ENCODE measurements at regions of chr1 and their contacts with region 1.

Region 1: GRCh38 chr1:216600730-216601609 is 122.3 kb downstream of the ESRRG start:
- DNase-seq: peak; percentile 78
- ATAC-seq: peak; percentile 94
- H3K4me3 ChIP-seq: peak overlapping the region; percentile 65
- H3K27ac ChIP-seq: peak overlapping the region; percentile 80
- H3K4me1 ChIP-seq: peaks cover 5% of the 10 kb centered on the region
- H3K27me3 ChIP-seq: no peaks in the 10 kb centered on the region
- CTCF ChIP-seq: peak; percentile 61
- POLR2A ChIP-seq: peak; percentile 53; the same call in 1 of the 2 replicates
- RAD21 ChIP-seq: peak; percentile 49

Region 2: GRCh38 chr1:216464489-216464888 is 136.5 kb before region 1 on chr1:
- CTCF ChIA-PET with region 1: no interaction called
- POLR2A ChIA-PET with region 1: no interaction called
- dilution Hi-C with region 1: no loop called
- in situ Hi-C with region 1: no loop called
- intact Hi-C with region 1: loop called (anchors 5 kb)
- DNase-seq: peak; percentile 98
- ATAC-seq: peak; percentile 92
- H3K4me3 ChIP-seq: no peak overlapping the region
- H3K27ac ChIP-seq: no peak overlapping the region
- H3K4me1 ChIP-seq: peaks cover 14% of the 10 kb centered on the region
- H3K27me3 ChIP-seq: no peaks in the 10 kb centered on the region
- CTCF ChIP-seq: no peak
- POLR2A ChIP-seq: no peak
- RAD21 ChIP-seq: no peak

Region 3: DNA sequence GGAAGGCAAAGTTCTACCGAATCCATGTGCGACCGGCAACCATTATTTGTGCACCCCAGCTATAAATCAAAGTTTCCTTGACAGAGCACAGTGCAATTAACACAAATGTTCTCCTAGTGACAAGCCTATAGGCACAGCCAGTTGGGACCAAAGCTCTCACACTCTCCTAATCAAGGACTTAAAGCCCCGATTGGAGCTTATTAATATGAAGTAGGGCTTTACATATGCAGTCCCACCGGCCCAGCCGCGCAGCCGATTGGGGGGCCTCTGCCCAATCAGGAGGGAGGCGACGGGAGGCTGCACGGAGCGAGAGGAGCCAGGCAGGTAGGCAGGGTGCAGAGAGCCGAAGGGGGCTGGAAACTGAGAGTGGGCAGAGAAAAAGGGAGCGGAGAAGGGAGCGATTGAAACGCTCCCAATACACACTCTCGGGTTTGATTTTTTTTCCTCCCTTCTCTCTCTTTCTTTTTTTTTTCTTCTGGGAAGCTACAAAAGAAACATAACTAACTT is 122.4 kb after region 1 on chr1 and contains the start of gene ESRRG:
- CTCF ChIA-PET with region 1: interaction called, 4 read pairs
- POLR2A ChIA-PET with region 1: no interaction called
- dilution Hi-C with region 1: no loop called
- in situ Hi-C with region 1: no loop called
- intact Hi-C with region 1: loop called (anchors 5 kb)
- DNase-seq: peak; percentile 17
- ATAC-seq: peak; percentile 93
- H3K4me3 ChIP-seq: peak within 1 kb of the TSS; percentile 37
- H3K27ac ChIP-seq: no peak within 1 kb of the TSS
- H3K4me1 ChIP-seq: peaks cover 2% of the 10 kb centered on the region; the same call in 1 of the 2 replicates
- H3K27me3 ChIP-seq: no peaks in the 10 kb centered on the region
- CTCF ChIP-seq: no peak
- POLR2A ChIP-seq: no peak
- RAD21 ChIP-seq: no peak
- total RNA-seq, gene ESRRG: 0.54 and 0.56 TPM in 2 replicates

Region 4: DNA sequence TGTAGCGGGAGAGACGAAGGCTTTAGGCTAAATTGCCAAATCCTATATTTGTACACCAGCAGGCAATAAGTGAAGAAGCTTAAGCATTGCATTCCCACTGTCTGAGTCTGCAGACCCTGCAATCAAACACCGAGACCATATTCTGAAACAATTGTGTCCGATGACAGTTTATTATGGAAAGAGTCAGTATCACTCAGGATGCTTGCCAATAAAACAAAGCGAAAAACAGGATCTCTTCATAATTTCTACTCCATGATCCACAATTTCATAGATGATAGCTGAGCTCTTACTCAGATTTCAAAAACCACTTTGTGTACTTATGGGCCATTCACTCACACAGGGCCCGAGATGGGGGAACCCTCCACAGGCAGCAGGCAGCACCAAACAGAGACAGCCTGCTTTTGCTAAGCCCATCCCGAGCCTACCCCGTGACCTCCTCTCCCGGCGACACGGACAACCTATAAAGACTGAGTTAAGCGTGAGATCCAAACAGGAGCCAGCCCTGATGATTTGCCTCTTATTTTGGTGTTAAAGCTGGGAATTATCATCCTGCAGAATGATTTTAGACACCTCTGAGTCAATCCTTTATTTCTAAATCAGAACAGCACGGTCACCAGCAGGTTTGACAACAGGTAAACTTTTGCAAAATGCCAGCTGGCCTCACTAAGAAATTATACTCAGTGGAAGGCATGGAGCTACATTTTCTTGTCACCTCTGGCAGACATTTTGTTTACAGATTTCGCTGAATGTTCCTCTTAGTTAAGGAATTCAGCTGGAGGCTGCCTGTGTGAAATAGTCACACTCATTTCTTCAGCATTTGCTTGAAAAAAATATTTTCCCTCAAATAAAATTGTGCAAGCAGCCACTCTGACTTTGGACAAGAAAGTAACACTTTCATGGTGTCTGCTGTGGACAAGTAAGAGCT is 817.6 kb after region 1 on chr1:
- CTCF ChIA-PET with region 1: no interaction called
- POLR2A ChIA-PET with region 1: no interaction called
- dilution Hi-C with region 1: no loop called
- in situ Hi-C with region 1: no loop called
- intact Hi-C with region 1: loop called (anchors 10 kb)
- DNase-seq: peak; percentile 58
- ATAC-seq: peak; percentile 85
- H3K4me3 ChIP-seq: peak overlapping the region; percentile 12; the same call in 1 of the 2 replicates
- H3K27ac ChIP-seq: peak overlapping the region; percentile 45; the same call in 1 of the 2 replicates
- H3K4me1 ChIP-seq: peaks cover 2% of the 10 kb centered on the region
- H3K27me3 ChIP-seq: no peaks in the 10 kb centered on the region
- CTCF ChIP-seq: no peak
- POLR2A ChIP-seq: no peak
- RAD21 ChIP-seq: no peak

Region 5: DNA sequence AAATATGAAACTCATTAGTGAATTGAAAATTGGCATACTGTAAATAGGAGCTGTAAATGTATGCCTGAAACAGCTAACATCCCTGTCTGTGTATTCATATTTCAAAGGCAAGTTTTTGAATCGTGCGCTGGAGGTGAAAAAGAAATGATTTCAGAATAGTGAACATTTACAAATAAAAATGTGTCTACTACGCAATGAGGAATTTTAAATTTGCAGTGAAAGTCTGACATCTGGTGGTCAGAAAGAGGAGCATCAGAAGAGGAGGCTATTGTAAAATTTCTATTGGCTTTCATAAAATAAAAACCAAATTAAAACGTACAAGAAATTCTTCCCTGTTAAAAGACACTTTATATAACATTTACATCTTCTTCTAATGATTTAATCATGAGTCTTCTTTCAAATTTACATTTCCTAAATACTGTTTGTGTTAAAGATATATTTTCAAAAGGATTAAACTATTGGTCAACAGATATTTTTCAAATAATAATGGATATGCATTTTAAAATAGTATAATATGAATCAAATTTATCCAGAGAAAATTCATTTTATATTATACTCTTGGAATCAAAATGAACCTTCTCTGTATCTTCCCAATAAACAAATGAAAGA is 1570.4 kb after region 1 on chr1:
- CTCF ChIA-PET with region 1: no interaction called
- POLR2A ChIA-PET with region 1: no interaction called
- dilution Hi-C with region 1: no loop called
- in situ Hi-C with region 1: no loop called
- intact Hi-C with region 1: loop called (anchors 10 kb)
- DNase-seq: peak; percentile 49
- ATAC-seq: peak; percentile 62
- H3K4me3 ChIP-seq: no peak overlapping the region
- H3K27ac ChIP-seq: no peak overlapping the region
- H3K4me1 ChIP-seq: no peaks in the 10 kb centered on the region
- H3K27me3 ChIP-seq: peaks cover 13% of the 10 kb centered on the region
- CTCF ChIP-seq: peak; percentile 84
- POLR2A ChIP-seq: no peak
- RAD21 ChIP-seq: peak; percentile 73

Measured in IMR-90 (cell line).